GM12878 (cell line): ENCODE measurements at regions of chr16 and their contacts with region 1.

Region 1: DNA sequence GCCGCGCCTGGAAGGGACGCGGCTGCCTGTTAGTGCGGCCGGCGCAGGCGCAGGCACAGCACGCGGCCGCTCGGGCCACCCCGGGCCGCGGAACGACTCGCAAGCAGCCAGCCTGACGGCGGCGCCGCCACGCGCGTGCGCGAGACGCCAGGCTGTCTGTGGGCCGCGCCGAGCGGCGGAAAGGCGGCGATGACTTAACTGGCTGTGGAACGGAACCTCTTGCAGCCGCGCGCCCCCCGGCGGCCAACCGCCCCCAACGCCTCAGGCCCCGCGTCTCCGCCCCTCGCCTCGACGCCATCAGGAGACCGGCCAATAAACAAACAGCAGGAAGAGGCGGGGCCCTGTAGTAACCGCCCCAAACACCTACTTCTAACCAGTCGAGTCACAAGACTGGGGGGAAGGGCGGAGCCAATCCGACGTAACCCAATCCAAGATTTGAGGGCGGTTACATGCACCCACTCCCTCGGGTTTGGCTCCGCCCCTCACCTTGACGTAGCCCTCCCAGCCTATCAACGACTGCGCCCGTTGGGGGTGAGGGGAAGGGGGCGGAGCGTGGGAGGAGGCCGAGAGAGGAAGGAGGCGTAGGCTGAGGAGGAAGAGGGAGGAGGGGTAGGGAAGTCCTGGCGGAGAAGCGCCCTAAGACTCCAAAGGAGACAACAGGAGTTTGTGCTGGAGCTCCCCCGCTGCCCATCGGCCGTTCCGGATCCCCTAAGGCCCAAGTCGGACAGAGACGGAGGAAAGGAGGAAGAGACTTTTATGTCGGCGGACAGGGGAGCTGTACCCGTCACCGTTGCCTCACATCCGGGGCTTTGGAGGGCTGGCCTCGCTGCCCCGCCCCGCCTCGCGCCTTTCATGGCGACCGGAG is at the start of gene FBRS:
- DNase-seq: peak; percentile 99
- ATAC-seq: peak; percentile 81
- H3K4me3 ChIP-seq: peak within 1 kb of the TSS; percentile 89
- H3K27ac ChIP-seq: peak within 1 kb of the TSS; percentile 98
- H3K4me1 ChIP-seq: peaks cover 22% of the 10 kb centered on the region
- H3K27me3 ChIP-seq: no peaks in the 10 kb centered on the region
- CTCF ChIP-seq: peak; percentile 72 to 99 (median 75); a peak in 5 of 6 replicates
- EP300 ChIP-seq: no peak
- POLR2A ChIP-seq: peak; percentile 84
- RAD21 ChIP-seq: peak; percentile 35; the same call in 1 of the 2 replicates
- polyA plus RNA-seq, gene FBRS: 0.45 to 0.95 TPM

Region 2: DNA sequence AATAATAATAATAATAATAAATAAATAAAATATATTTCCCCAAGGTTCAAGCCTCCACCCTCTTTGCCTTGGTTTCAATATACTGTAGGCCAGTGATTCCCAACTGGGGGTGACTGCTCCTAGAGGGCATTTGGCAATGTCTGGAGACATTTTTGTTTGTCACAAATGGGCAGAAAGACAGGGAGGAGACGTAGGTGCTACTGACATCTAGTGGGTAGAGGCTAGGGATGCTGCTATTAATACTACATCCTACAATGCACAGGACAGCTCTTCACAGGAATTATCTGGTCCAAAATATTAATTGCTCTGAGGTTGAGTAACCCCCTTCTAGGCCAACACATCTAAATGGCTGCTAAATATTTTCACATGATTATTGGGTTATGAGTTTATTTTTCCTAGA is 20.2 kb before region 1 on chr16:
- CTCF ChIA-PET with region 1: interaction called, 6 read pairs
- POLR2A ChIA-PET with region 1: interaction called, 27 read pairs
- RAD21 ChIA-PET with region 1: interaction called, 9 read pairs
- SMC1A ChIA-PET with region 1: no interaction called
- in situ Hi-C with region 1: no loop called
- intact Hi-C with region 1: no loop called
- DNase-seq: no peak
- ATAC-seq: peak; percentile 38
- H3K4me3 ChIP-seq: no peak overlapping the region
- H3K27ac ChIP-seq: no peak overlapping the region
- H3K4me1 ChIP-seq: no peaks in the 10 kb centered on the region
- H3K27me3 ChIP-seq: no peaks in the 10 kb centered on the region
- CTCF ChIP-seq: peak; percentile 61 to 70 (median 63); a peak in 5 of 6 replicates
- EP300 ChIP-seq: no peak
- POLR2A ChIP-seq: no peak
- RAD21 ChIP-seq: peak; percentile 58

Region 3: DNA sequence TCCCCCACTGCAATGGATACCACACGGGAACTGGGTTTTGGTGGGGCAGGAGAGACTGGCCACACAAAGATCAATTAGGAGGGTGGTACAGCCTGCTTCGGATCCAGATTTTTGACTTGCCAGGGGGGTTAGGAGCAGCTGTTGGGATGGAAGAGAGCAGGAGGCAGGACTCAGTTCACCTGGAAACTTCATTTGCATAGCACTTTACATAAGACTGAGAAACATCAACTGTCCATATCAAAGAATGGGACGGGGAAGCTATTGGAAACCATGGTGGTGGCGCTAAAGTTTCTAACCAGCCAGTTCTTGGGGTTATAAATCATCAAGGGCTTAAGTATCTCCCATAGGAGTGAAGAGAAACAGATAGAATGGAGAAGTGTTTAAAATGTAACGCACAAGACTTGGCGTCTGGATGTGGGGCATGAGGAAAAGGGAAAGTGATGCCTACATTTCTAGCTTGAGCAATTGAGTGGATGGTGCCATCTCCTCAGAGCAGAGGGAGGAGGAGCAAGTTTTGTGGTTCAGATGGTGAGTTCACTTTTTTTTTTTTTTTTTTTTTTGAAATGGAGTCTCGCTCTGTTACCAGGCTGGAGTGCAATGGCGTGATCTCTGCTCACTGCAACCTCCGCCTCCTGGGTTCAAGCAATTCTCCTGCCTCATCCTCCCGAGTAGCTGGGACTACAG is 34.4 kb after region 1 on chr16:
- CTCF ChIA-PET with region 1: interaction called, 61 read pairs
- POLR2A ChIA-PET with region 1: interaction called, 36 read pairs
- RAD21 ChIA-PET with region 1: interaction called, 64 read pairs
- SMC1A ChIA-PET with region 1: interaction called, 80 read pairs
- in situ Hi-C with region 1: loop called (anchors 5 kb)
- intact Hi-C with region 1: no loop called
- DNase-seq: no peak
- ATAC-seq: no peak
- H3K4me3 ChIP-seq: no peak overlapping the region
- H3K27ac ChIP-seq: no peak overlapping the region
- H3K4me1 ChIP-seq: peaks cover 4% of the 10 kb centered on the region; the same call in 1 of the 2 replicates
- H3K27me3 ChIP-seq: no peaks in the 10 kb centered on the region
- CTCF ChIP-seq: no peak
- EP300 ChIP-seq: no peak
- POLR2A ChIP-seq: no peak
- RAD21 ChIP-seq: no peak

Region 4: DNA sequence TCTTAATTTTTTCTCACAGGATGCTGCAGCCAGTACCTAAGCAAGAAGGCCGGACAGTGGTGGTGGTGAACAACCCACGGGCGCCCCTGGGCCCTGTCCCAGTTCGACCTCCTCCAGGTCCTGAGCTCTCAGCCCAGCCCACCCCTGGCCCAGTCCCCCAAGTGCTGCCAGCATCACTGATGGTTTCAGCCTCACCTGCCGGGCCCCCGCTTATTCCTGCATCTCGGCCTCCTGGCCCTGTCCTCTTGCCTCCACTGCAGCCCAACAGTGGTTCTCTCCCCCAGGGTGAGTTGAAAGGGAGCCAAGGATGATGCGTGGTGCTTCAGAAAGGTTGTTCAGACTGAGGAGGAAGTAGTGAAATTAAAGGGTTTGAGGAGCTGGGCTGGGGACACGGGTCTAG is 62.6 kb after region 1 on chr16:
- CTCF ChIA-PET with region 1: no interaction called
- POLR2A ChIA-PET with region 1: no interaction called
- RAD21 ChIA-PET with region 1: no interaction called
- SMC1A ChIA-PET with region 1: no interaction called
- in situ Hi-C with region 1: no loop called
- intact Hi-C with region 1: no loop called
- DNase-seq: no peak
- ATAC-seq: no peak
- H3K4me3 ChIP-seq: no peak overlapping the region
- H3K27ac ChIP-seq: no peak overlapping the region
- H3K4me1 ChIP-seq: no peaks in the 10 kb centered on the region; the same call in 1 of the 2 replicates
- H3K27me3 ChIP-seq: no peaks in the 10 kb centered on the region
- CTCF ChIP-seq: no peak
- EP300 ChIP-seq: no peak
- POLR2A ChIP-seq: 0 out of 2 replicates have a peak, but pooled peaks have one; percentile 4
- RAD21 ChIP-seq: no peak

Region 5: DNA sequence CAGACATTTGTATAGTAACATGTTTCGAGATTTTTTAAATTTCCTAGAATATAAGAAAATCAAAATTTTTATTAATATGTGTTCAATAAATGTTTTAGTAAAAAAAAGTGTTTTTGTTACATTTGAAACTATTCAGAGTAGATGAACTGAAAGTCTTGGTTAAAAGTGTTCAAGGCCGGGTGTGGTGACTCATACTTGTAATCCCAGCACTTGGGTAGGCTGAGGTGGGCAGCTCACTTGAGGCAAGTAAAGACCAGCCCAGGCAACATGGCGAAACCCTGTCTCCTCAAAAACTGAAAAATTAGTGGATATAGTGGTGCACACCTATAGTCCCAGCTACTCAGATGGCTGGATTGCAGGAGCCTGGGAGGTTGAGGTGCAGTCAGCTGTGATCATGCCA is 73.3 kb after region 1 on chr16:
- CTCF ChIA-PET with region 1: no interaction called
- POLR2A ChIA-PET with region 1: no interaction called
- RAD21 ChIA-PET with region 1: no interaction called
- SMC1A ChIA-PET with region 1: no interaction called
- in situ Hi-C with region 1: no loop called
- intact Hi-C with region 1: no loop called
- DNase-seq: no peak
- ATAC-seq: peak; percentile 68
- H3K4me3 ChIP-seq: no peak overlapping the region
- H3K27ac ChIP-seq: 0 out of 2 replicates have a peak overlapping the region, but pooled peaks have one; percentile 11
- H3K4me1 ChIP-seq: no peaks in the 10 kb centered on the region
- H3K27me3 ChIP-seq: no peaks in the 10 kb centered on the region
- CTCF ChIP-seq: no peak
- EP300 ChIP-seq: no peak
- POLR2A ChIP-seq: no peak
- RAD21 ChIP-seq: no peak

Region 6: DNA sequence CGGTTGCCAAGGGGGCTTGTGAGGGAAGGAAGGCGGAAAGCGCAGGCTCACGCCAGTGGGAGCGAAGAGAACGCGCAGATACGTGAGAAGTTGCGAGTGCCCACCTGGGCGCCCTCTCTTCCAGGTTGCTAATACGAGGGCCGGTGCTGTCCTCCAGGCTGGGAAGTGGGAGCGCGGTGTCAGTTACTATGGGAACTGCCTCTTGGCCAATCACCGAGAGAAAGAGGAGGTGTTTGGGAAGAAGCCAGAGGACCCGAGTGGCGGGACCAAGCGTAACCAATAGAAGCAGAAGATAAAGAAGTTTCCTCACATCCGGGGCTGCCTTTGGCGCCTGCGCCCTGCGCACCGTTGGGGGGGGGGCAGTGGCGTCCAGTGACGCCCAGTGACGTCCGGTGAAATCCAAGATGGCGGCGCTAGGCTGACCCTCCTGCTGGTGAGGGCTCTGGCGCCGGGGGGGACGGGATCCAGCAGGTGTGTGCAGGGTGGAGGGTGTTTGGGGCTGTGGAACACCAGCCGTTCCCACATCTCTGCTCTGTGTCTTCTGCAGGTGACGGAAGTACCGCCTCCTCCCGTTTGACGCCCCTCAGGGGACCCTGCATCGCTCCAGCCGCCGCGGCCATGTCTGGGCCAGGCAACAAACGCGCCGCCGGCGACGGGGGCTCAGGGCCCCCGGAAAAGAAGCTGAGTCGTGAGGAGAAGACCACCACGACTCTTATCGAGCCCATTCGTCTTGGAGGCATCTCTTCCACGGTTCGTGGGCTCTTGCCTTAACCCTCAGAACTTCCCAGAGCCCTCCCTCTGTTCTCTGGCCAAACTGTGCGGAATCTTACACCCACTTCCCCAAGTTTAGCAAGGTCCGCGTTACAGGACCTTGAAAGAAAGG is 104.1 kb after region 1 on chr16 and contains the starts of genes CFAP119 and RNF40:
- CTCF ChIA-PET with region 1: no interaction called
- POLR2A ChIA-PET with region 1: no interaction called
- RAD21 ChIA-PET with region 1: no interaction called
- SMC1A ChIA-PET with region 1: no interaction called
- in situ Hi-C with region 1: no loop called
- intact Hi-C with region 1: loop called (anchors 5 kb)
- DNase-seq: peak; percentile 88
- ATAC-seq: peak; percentile 95
- H3K4me3 ChIP-seq: peak within 1 kb of the TSS; percentile 83
- H3K27ac ChIP-seq: peak within 1 kb of the TSS; percentile 74
- H3K4me1 ChIP-seq: peaks cover 9% of the 10 kb centered on the region
- H3K27me3 ChIP-seq: no peaks in the 10 kb centered on the region
- CTCF ChIP-seq: 0 out of 6 replicates have a peak, but pooled peaks of 1 of the 3 experiments have one; percentile 6
- EP300 ChIP-seq: no peak
- POLR2A ChIP-seq: peak; percentile 93
- RAD21 ChIP-seq: no peak
- polyA plus RNA-seq, gene CFAP119: 3.2 to 3.9 TPM
- polyA plus RNA-seq, gene RNF40: 3.7 to 8.0 TPM

Region 7: GRCh38 chr16:30922960-30923535 is 264.9 kb after region 1 on chr16:
- CTCF ChIA-PET with region 1: no interaction called
- POLR2A ChIA-PET with region 1: no interaction called
- RAD21 ChIA-PET with region 1: no interaction called
- SMC1A ChIA-PET with region 1: no interaction called
- in situ Hi-C with region 1: no loop called
- intact Hi-C with region 1: loop called (anchors 10 kb)
- DNase-seq: peak; percentile 98
- ATAC-seq: peak; percentile 82
- H3K4me3 ChIP-seq: peak overlapping the region; percentile 80
- H3K27ac ChIP-seq: peak overlapping the region; percentile 89
- H3K4me1 ChIP-seq: peaks cover 4% of the 10 kb centered on the region; the same call in 1 of the 2 replicates
- H3K27me3 ChIP-seq: no peaks in the 10 kb centered on the region
- CTCF ChIP-seq: no peak
- EP300 ChIP-seq: no peak
- POLR2A ChIP-seq: peak; percentile 72
- RAD21 ChIP-seq: no peak